SK-N-SH (cell line): ENCODE measurements at regions of chr2 and their contacts with region 1.

Region 1: GRCh38 chr2:26577434-26578112 is 63.6 kb downstream of the CIB4 start:
- DNase-seq: peak; percentile 94
- H3K4me3 ChIP-seq: peak overlapping the region in 1 of 2 experiments; percentile 2; a peak in 1 of 4 replicates
- H3K27ac ChIP-seq: no peak overlapping the region
- H3K4me1 ChIP-seq: peaks cover 0 to 3% of the 10 kb centered on the region in 2 experiments; a peak in 1 of 4 replicates
- H3K27me3 ChIP-seq: peaks cover 67% of the 10 kb centered on the region
- CTCF ChIP-seq: peak; percentile 99
- EP300 ChIP-seq: no peak
- RAD21 ChIP-seq: peak; percentile 98

Region 2: DNA sequence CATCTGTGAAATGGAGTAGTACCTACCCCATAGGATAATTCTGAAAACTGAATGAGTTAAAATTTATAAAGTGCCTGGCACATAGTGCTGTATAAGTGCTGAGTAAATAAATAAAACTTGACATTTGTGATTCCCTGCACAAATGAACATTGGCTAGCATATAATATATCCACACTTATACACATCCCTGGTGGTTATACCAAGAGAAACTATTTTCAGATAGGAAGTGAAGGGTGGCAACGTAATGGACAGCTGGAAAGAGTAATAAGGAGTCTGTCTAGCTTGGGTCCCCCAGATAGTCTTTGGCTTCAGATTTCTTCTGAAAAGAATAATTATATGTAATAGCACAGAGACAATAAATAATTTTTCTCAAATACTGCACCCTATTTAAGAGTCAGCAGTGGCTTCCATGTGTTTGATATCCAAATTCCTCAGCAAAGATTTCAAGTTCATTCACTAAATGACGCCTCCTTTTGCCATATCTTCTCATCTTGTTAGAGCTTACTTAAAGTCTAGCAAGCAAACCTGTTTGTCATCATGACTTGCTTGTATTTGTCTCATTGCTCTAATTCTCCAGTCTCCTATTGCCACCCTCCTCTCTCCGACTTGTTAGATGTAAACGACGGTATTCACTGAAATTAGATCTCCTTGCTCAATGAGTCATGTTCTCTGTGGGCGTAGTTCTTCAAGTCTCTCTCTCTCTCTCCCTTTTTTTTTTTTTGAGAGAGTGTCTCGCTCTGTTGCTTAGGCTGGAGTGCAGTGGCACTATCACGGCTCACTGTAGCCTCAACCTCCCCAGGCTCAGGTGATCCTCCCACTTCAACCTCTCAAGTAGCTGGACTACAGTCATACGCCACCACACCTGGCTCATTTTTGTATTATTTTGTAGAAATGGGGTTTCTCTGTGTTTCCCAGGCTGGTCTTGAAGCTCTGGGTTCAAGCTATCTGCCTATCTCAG is 222.3 kb before region 1 on chr2:
- CTCF ChIA-PET with region 1: interaction called, 10 read pairs
- POLR2A ChIA-PET with region 1: no interaction called
- DNase-seq: no peak
- H3K4me3 ChIP-seq: no peak overlapping the region
- H3K27ac ChIP-seq: peak overlapping the region in 1 of 2 experiments; percentile 26; a peak in 2 of 4 replicates
- H3K4me1 ChIP-seq: peaks cover 0 to 16% of the 10 kb centered on the region in 2 experiments; a peak in 2 of 4 replicates
- H3K27me3 ChIP-seq: no peaks in the 10 kb centered on the region
- CTCF ChIP-seq: no peak
- EP300 ChIP-seq: no peak
- RAD21 ChIP-seq: no peak

Region 3: DNA sequence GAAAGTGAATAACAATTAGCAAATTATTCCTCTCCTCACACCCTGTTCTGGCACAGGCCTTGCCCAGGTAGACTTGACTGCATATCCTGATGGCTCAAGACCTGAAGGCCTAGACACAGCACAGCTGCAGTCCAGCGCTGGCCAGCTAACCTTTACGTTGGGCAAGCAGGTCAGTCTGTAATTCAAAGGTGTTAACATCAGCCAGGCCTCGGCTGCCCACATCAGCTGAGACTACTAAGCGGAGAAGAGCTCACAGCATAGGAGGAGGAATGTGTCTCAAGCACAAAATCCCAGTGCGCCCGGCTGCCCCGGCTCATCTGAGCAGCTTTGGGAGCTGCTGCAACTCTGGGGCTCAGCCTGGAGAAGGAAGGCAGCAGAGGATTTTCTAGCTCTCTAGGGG is 66.1 kb before region 1 on chr2:
- CTCF ChIA-PET with region 1: interaction called, 10 read pairs
- POLR2A ChIA-PET with region 1: no interaction called
- DNase-seq: no peak
- H3K4me3 ChIP-seq: no peak overlapping the region
- H3K27ac ChIP-seq: no peak overlapping the region
- H3K4me1 ChIP-seq: no peaks in the 10 kb centered on the region
- H3K27me3 ChIP-seq: peaks cover 26% of the 10 kb centered on the region; the same call in 1 of the 2 replicates
- CTCF ChIP-seq: no peak
- EP300 ChIP-seq: no peak
- RAD21 ChIP-seq: no peak

Region 4: DNA sequence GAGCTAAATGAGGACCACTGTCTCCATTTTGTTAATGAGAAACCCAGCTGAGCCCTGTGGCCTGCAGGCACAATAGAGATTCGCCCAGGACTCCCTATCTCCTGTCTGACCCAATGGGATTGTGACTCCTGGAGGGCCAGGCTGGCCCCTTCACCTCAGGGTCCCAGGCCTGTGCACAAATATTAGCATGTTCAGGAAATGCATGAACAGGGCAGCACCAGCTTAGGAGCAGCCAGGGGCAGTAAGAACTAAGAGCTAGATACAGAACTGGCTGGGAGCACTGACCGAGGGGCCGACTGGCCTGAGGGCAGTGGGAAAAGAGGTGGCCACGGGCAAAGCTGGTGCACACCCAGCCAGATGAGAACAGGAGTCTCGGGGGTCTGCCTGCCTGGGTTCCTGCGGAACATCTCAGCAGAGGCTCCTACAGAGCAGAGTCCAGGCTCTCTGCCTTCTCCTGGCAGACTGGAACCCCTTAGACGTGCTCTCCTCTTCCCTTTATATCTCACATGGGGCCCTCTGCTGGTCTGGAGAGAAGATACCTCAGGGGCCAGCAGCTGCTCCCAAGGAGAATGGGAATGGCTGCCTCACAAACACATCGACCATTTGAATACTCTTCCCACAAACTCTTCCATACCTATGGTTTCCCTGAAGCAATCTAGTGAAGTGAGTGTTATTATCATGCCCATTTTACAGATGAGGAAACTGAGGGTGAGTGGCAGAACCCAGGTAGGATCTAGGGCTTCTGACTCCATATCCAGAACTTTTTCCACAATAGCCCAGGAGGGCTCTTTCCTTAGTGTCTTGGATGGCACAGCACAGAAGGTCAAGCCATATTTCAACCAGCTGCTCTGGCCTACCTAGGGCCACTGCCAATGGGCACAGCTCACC is 22.1 kb before region 1 on chr2:
- CTCF ChIA-PET with region 1: interaction called, 153 read pairs
- POLR2A ChIA-PET with region 1: no interaction called
- DNase-seq: no peak
- H3K4me3 ChIP-seq: no peak overlapping the region
- H3K27ac ChIP-seq: no peak overlapping the region
- H3K4me1 ChIP-seq: no peaks in the 10 kb centered on the region
- H3K27me3 ChIP-seq: peaks cover 55% of the 10 kb centered on the region
- CTCF ChIP-seq: peak; percentile 34
- EP300 ChIP-seq: no peak
- RAD21 ChIP-seq: no peak

Region 5: DNA sequence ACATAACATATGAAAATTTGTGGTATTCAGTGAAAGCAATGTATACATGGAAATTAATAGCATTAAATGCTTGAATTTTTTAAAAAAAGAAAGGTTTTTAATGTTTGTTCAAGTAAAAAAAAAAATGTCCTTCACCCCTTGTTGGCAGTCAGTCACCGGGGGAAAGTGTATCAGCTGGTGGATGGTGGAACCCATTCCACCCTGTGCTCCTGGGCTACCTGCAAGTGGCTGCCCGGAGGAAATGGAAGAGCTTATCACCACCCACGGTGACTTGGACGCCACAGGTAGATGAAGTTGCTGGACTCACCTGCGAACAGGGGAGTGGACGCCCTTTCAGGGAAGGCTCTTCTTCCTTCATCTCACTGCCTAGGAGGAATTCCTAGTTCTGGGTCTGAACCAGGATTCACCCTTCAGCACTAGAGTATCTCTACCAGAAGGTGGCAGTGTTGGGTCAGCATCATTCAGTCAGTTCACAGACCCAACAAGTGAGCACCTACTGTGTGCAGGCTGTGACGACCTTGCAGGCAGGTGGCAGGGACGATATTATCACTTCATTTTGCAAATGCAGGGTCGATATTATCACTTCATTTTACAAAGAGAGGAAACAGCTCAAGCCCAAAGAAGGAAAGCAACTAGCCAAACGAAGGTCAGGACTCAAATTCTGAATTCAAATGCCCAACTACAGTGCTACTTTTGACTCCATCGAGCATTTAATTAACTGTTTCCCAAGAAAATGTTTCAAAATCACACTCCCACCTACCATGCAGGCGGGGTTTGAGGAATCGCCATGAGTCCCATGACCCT is 27.8 kb after region 1 on chr2:
- CTCF ChIA-PET with region 1: interaction called, 29 read pairs
- POLR2A ChIA-PET with region 1: no interaction called
- DNase-seq: peak; percentile 78
- H3K4me3 ChIP-seq: no peak overlapping the region; a peak in 1 of 4 replicates
- H3K27ac ChIP-seq: no peak overlapping the region
- H3K4me1 ChIP-seq: no peaks in the 10 kb centered on the region; a peak in 1 of 4 replicates
- H3K27me3 ChIP-seq: peaks cover 21% of the 10 kb centered on the region
- CTCF ChIP-seq: peak; percentile 94
- EP300 ChIP-seq: no peak
- RAD21 ChIP-seq: peak; percentile 99

Region 6: GRCh38 chr2:26619521-26619951 is 42.0 kb after region 1 on chr2:
- CTCF ChIA-PET with region 1: no interaction called
- POLR2A ChIA-PET with region 1: no interaction called
- DNase-seq: peak; percentile 10
- H3K4me3 ChIP-seq: no peak overlapping the region
- H3K27ac ChIP-seq: no peak overlapping the region
- H3K4me1 ChIP-seq: peaks cover 0 to 13% of the 10 kb centered on the region in 2 experiments; a peak in 1 of 4 replicates
- H3K27me3 ChIP-seq: peaks cover 35% of the 10 kb centered on the region
- CTCF ChIP-seq: no peak
- EP300 ChIP-seq: no peak
- RAD21 ChIP-seq: no peak

Region 7: GRCh38 chr2:26752656-26753055 is 175.1 kb after region 1 on chr2:
- CTCF ChIA-PET with region 1: interaction called, 128 read pairs
- POLR2A ChIA-PET with region 1: no interaction called
- DNase-seq: peak; percentile 77
- H3K4me3 ChIP-seq: no peak overlapping the region
- H3K27ac ChIP-seq: peak overlapping the region in 1 of 2 experiments; percentile 59; a peak in 2 of 4 replicates
- H3K4me1 ChIP-seq: peaks cover 6 to 21% of the 10 kb centered on the region in 2 experiments; a peak in 2 of 4 replicates
- H3K27me3 ChIP-seq: no peaks in the 10 kb centered on the region
- CTCF ChIP-seq: no peak
- EP300 ChIP-seq: peak in 1 of 2 experiments; percentile 29; a peak in 1 of 4 replicates
- RAD21 ChIP-seq: no peak

Region 8: DNA sequence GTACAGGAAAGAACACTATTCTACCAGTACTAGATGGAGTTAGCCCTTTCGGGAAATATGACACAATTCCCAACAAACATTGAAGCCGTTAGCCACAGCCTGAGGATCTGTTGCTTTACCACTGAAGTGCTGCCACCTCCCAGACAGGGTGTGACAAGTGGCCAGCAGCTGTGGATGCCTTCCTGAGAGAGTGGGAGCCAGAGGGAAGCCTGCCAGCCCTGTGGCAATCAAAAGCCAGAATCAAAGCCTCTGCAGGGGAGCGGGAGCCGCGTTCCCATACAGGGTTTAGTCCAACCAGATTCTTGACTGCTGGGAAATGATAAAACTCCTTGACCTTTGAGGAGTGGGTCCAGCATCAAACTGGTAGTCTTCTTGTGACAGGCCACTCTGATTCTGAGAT is 1124.1 kb after region 1 on chr2:
- CTCF ChIA-PET with region 1: no interaction called
- POLR2A ChIA-PET with region 1: no interaction called
- DNase-seq: no peak
- H3K4me3 ChIP-seq: no peak overlapping the region
- H3K27ac ChIP-seq: no peak overlapping the region
- H3K4me1 ChIP-seq: peaks cover 10 to 11% of the 10 kb centered on the region in 2 experiments; a peak in 3 of 4 replicates
- H3K27me3 ChIP-seq: no peaks in the 10 kb centered on the region
- CTCF ChIP-seq: no peak
- EP300 ChIP-seq: no peak
- RAD21 ChIP-seq: no peak